ENCODE measurements at regions of chr1 and their contacts with region 1.

Region 1: GRCh38 chr1:12619792-12620487 is 1.9 kb upstream of the DHRS3 start:
- DNase-seq: peak; percentile 64 to 80 (median 75)
- H3K4me3 ChIP-seq: peak overlapping the region in 3 of 7 experiments; percentile 77 to 83 (median 80)
- H3K27ac ChIP-seq: peak overlapping the region in 1 of 2 experiments; percentile 17
- H3K4me1 ChIP-seq: peaks cover 0 to 63% (median 59%) of the 10 kb centered on the region in 4 experiments
- H3K27me3 ChIP-seq: peaks cover 0 to 32% (median 17%) of the 10 kb centered on the region in 5 experiments

Region 2: GRCh38 chr1:12244078-12244477 is 375.9 kb before region 1 on chr1:
- CTCF ChIA-PET with region 1: no interaction called
- POLR2A ChIA-PET with region 1: no interaction called
- DNase-seq: peak in 2 of 3 donors; percentile 6 to 33
- H3K4me3 ChIP-seq: no peak overlapping the region
- H3K27ac ChIP-seq: no peak overlapping the region
- H3K4me1 ChIP-seq: no peaks in the 10 kb centered on the region
- H3K27me3 ChIP-seq: no peaks in the 10 kb centered on the region

Region 3: GRCh38 chr1:12549460-12550349 is 70.2 kb before region 1 on chr1:
- CTCF ChIA-PET with region 1: no interaction called
- POLR2A ChIA-PET with region 1: no interaction called
- DNase-seq: no peak
- H3K4me3 ChIP-seq: no peak overlapping the region
- H3K27ac ChIP-seq: peak overlapping the region in 1 of 2 experiments; percentile 25
- H3K4me1 ChIP-seq: no peaks in the 10 kb centered on the region
- H3K27me3 ChIP-seq: no peaks in the 10 kb centered on the region

Region 4: GRCh38 chr1:12597792-12598191 is 22.1 kb before region 1 on chr1:
- CTCF ChIA-PET with region 1: interaction called, 37 read pairs
- POLR2A ChIA-PET with region 1: interaction called, 5 read pairs
- DNase-seq: peak in 1 of 3 donors; percentile 10
- H3K4me3 ChIP-seq: no peak overlapping the region
- H3K27ac ChIP-seq: no peak overlapping the region
- H3K4me1 ChIP-seq: peaks cover 0 to 25% (median 14%) of the 10 kb centered on the region in 4 experiments
- H3K27me3 ChIP-seq: peaks cover 0 to 11% (median 2%) of the 10 kb centered on the region in 5 experiments

Region 5: DNA sequence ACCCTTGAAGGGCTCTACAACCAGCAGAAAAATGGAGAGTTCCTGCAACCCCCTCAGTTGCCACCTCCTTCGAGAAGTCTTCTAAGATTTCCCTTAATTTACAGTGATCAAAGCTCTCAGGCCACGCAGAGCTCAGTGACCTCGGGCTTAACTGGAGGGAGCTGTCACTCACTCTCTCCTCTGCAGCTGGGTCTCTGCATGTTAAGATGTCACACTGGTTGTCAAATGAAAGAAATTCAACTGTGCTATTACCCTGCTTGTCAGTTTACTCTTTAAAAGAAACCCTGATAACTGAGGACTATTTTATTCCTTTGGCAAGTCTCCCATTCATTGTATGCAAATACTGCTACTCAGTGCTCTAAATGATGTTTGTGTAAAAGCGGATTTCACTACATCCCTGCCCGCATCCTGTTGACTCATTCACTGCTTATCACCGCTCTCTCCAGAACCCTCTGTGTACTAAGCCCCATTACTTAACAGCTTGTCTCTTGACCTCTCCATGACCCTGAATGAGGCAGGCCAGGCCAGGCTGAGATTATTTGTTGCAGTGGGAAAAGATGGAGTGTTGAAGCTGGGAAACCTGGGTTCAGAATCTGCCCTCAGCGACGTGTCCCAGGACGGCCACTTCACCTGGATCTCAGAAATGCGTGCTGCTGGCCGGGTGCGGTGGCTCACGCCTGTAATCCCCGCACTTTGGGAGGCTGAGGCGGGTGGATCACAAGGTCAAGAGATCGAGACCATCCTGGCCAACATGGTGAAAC is 15.6 kb before region 1 on chr1:
- CTCF ChIA-PET with region 1: interaction called, 37 read pairs
- POLR2A ChIA-PET with region 1: interaction called, 7 read pairs
- DNase-seq: peak; percentile 82 to 95 (median 93)
- H3K4me3 ChIP-seq: no peak overlapping the region
- H3K27ac ChIP-seq: no peak overlapping the region
- H3K4me1 ChIP-seq: peaks cover 4 to 21% (median 12%) of the 10 kb centered on the region in 4 experiments
- H3K27me3 ChIP-seq: peaks cover 0 to 2% (median 0%) of the 10 kb centered on the region in 5 experiments

Region 6: GRCh38 chr1:13570924-13571323 is 951.0 kb after region 1 on chr1:
- CTCF ChIA-PET with region 1: no interaction called
- POLR2A ChIA-PET with region 1: no interaction called
- DNase-seq: peak; percentile 9 to 28 (median 20)
- H3K4me3 ChIP-seq: no peak overlapping the region
- H3K27ac ChIP-seq: no peak overlapping the region
- H3K4me1 ChIP-seq: no peaks in the 10 kb centered on the region
- H3K27me3 ChIP-seq: peaks cover 0 to 35% (median 11%) of the 10 kb centered on the region in 5 experiments

Measured in common myeloid progenitor, CD34-positive (primary cell).